ENCODE measurements at regions of chr4 and their contacts with region 1.

Region 1: GRCh38 chr4:83284193-83285054 is at the start of gene COQ2:
- DNase-seq: peak; percentile 96
- H3K4me3 ChIP-seq: peak within 1 kb of the TSS; percentile 67 to 74
- H3K27ac ChIP-seq: peak within 1 kb of the TSS; percentile 95
- H3K4me1 ChIP-seq: no peaks in the 10 kb centered on the region
- H3K27me3 ChIP-seq: no peaks in the 10 kb centered on the region
- CTCF ChIP-seq: peak; percentile 27 to 67 (median 45)
- POLR2A ChIP-seq: peak; percentile 53 to 80
- total RNA-seq, gene COQ2: 3.2 to 22.6 (median 9.5) TPM

Region 2: DNA sequence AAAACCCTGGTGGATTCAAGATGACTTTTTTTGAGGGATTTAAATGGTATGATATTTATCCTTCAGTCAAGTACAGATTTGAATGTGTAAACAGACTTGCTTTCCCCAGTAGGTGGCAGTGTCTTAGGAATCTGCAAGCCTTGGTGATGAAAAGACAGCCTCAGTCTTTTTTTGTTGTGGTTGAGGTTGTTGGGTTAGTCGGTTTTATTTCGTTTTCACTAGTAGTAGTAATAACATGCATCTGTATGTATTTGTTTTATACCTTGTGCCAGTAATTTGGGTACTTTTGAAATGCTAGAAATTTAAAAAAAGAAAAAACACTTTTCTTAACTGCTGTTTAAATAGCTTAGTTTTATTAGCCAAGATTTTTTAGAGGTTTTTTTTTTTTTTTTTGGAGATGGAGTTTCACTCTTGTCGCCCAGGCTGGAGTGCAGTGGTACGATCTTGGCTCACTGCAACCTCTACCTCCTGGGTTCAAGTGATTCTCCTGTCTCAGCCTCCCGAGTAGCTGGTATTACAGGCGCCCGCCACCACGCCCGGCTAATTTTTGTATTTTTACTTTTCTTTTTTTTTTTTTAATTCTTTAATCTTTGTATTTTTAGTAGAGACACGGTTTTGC is 210.2 kb before region 1 on chr4:
- intact Hi-C with region 1: loop called (anchors 10 kb)
- DNase-seq: peak in 1 of 2 donors; percentile 27
- H3K4me3 ChIP-seq: no peak overlapping the region
- H3K27ac ChIP-seq: peak overlapping the region; percentile 37 to 86
- H3K4me1 ChIP-seq: peaks cover 0 to 8% of the 10 kb centered on the region in 2 donors
- H3K27me3 ChIP-seq: no peaks in the 10 kb centered on the region
- CTCF ChIP-seq: peak; percentile 60 to 69 (median 64)
- POLR2A ChIP-seq: no peak